Heart right ventricle (tissue), 16 donors: ENCODE measurements at regions of chr9 and their contacts with region 1.

Region 1: GRCh38 chr9:35903049-35903448 is 3.0 kb upstream of the HRCT1 start:
- DNase-seq: peak in 1 of 2 donors; percentile 55
- ATAC-seq: no peak
- H3K4me3 ChIP-seq: no peak overlapping the region
- H3K27ac ChIP-seq: peak overlapping the region in 1 of 10 donors; percentile 98
- H3K4me1 ChIP-seq: peaks cover 19 to 53% (median 50%) of the 10 kb centered on the region in 9 donors
- H3K27me3 ChIP-seq: no peaks in the 10 kb centered on the region
- CTCF ChIP-seq: peak; percentile 61 to 82 (median 77)

Region 2: GRCh38 chr9:35945341-35946018 is 42.4 kb after region 1 on chr9:
- intact Hi-C with region 1: loop called (anchors 1 to 5 kb)
- DNase-seq: peak; percentile 85 to 86
- ATAC-seq: peak; percentile 75 to 85 (median 80)
- H3K4me3 ChIP-seq: peak overlapping the region in 6 of 10 donors; percentile 7 to 30 (median 18)
- H3K27ac ChIP-seq: peak overlapping the region in 9 of 10 donors; percentile 48 to 77 (median 73)
- H3K4me1 ChIP-seq: peaks cover 0 to 47% (median 26%) of the 10 kb centered on the region in 9 donors
- H3K27me3 ChIP-seq: no peaks in the 10 kb centered on the region
- CTCF ChIP-seq: peak; percentile 75 to 96 (median 86)

Region 3: GRCh38 chr9:35954942-35955546 is 52.0 kb after region 1 on chr9:
- intact Hi-C with region 1: loop called in 1 of 10 experiments (anchors 2 kb)
- DNase-seq: peak in 1 of 2 donors; percentile 54
- ATAC-seq: peak; percentile 61 to 84 (median 77)
- H3K4me3 ChIP-seq: no peak overlapping the region
- H3K27ac ChIP-seq: peak overlapping the region in 1 of 10 donors; percentile 8
- H3K4me1 ChIP-seq: peaks cover 0 to 14% (median 3%) of the 10 kb centered on the region in 9 donors
- H3K27me3 ChIP-seq: no peaks in the 10 kb centered on the region
- CTCF ChIP-seq: peak; percentile 81 to 92 (median 90)

Region 4: GRCh38 chr9:36023260-36024048 is 120.4 kb after region 1 on chr9:
- intact Hi-C with region 1: loop called in 8 of 10 experiments (anchors 1 to 5 kb)
- DNase-seq: peak; percentile 29 to 62
- ATAC-seq: peak; percentile 17 to 72 (median 60)
- H3K4me3 ChIP-seq: no peak overlapping the region
- H3K27ac ChIP-seq: no peak overlapping the region
- H3K4me1 ChIP-seq: peaks cover 0 to 11% (median 0%) of the 10 kb centered on the region in 9 donors
- H3K27me3 ChIP-seq: no peaks in the 10 kb centered on the region
- CTCF ChIP-seq: peak; percentile 64 to 88 (median 83)

Region 5: GRCh38 chr9:36029765-36030528 is 126.9 kb after region 1 on chr9:
- intact Hi-C with region 1: loop called in 1 of 10 experiments (anchors 5 kb)
- DNase-seq: no peak
- ATAC-seq: peak in 7 of 8 donors; percentile 34 to 88 (median 57)
- H3K4me3 ChIP-seq: no peak overlapping the region
- H3K27ac ChIP-seq: peak overlapping the region in 1 of 10 donors; percentile 21
- H3K4me1 ChIP-seq: peaks cover 0 to 17% (median 0%) of the 10 kb centered on the region in 9 donors
- H3K27me3 ChIP-seq: no peaks in the 10 kb centered on the region
- CTCF ChIP-seq: no peak

Region 6: DNA sequence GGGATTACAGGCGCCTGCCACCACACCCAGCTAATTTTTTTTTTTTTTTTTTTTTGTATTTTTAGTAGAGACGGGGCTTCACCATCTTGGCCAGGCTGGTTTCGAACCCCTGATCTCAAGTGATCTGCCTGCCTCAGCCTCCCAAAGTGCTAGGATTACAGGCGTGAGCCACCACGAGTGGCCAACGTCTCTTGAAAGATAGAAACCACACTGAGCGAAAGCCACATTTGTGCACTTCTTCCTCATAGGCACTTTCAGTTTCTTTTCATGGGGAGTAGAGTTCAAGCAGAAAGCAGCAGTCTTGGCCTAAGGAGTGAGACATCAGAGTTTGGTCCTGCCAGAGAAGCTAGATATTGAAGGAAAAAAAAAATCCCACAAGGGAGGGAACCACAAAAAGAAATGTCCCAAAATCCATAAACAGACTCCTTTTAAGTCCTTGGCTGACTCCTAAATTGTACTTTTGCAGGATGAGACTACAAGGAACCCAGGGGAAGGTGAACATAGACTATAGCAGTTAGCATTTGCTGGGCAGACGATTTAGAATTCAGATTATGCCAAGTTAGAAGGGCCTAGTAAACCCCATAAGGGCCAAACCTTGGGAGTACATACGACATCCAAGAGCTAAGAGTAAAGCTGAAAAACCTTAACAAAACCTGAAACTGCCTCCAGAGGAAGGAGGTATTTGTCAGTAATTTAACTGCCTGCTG is 189.6 kb after region 1 on chr9:
- intact Hi-C with region 1: no loop called
- DNase-seq: no peak
- ATAC-seq: peak in 3 of 8 donors; percentile 43 to 72 (median 65)
- H3K4me3 ChIP-seq: no peak overlapping the region
- H3K27ac ChIP-seq: peak overlapping the region in 3 of 10 donors; percentile 12 to 74 (median 64)
- H3K4me1 ChIP-seq: peaks cover 0 to 26% (median 12%) of the 10 kb centered on the region in 9 donors
- H3K27me3 ChIP-seq: no peaks in the 10 kb centered on the region
- CTCF ChIP-seq: no peak